ENCODE measurements at regions of chr11 and their contacts with region 1.

Region 1: GRCh38 chr11:131146827-131147490 is 223.5 kb upstream of the NTM start:
- DNase-seq: no peak

Region 2: DNA sequence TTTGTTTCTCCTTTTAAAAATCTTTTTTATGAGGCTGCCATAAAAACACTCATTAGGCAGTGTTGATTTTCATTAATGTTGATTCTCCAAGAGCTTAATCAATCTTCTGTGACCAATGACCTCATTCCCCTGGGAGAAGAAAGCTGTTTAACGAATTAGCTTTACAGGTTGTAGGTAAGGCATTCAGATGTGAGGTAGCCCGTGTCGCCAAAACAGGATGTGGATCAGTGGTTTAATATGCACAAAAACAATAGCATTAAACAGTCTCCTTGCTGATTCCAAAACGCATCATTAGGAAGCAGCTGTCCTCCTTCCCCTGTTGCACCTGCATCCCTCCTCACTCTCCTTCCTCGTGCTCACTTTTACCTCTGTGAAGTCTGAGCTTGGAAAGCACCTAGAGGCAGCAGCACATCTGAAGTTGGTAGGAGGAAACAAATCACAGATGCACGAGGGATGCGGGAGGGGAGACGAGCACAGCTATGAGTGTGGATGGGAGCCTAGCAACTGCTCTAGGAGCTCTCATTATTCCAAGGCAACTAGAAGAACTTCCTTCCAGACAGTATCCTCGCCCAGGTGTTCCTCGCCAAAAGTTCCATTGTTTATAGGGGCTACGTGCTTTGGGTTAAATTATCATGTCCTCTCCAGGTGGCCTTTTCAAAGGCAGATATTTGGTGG is 51.3 kb before region 1 on chr11:
- intact Hi-C with region 1: loop called in 1 of 2 experiments (anchors 1 kb)
- DNase-seq: no peak

Measured in posterior vena cava (tissue), 2 donors.